ENCODE measurements at regions of chr9 and their contacts with region 1.

Region 1: GRCh38 chr9:14314929-14315645 is 1.1 kb upstream of the NFIB start:
- DNase-seq: peak; percentile 70 to 89
- ATAC-seq: peak; percentile 60 to 66
- H3K4me3 ChIP-seq: peak overlapping the region; percentile 68
- H3K27ac ChIP-seq: peak overlapping the region; percentile 94 to 99
- H3K4me1 ChIP-seq: peaks cover 48% of the 10 kb centered on the region
- CTCF ChIP-seq: no peak
- EP300 ChIP-seq: no peak; a peak in 3 of 5 replicates
- POLR2A ChIP-seq: peak; percentile 19
- RAD21 ChIP-seq: no peak

Region 2: GRCh38 chr9:14221558-14221957 is 93.5 kb before region 1 on chr9:
- CTCF ChIA-PET with region 1: interaction called, 3 read pairs
- POLR2A ChIA-PET with region 1: interaction called, 15 read pairs
- DNase-seq: peak; percentile 65 to 79
- ATAC-seq: peak; percentile 89 to 92
- H3K4me3 ChIP-seq: no peak overlapping the region
- H3K27ac ChIP-seq: peak overlapping the region; percentile 83 to 92
- H3K4me1 ChIP-seq: peaks cover 63% of the 10 kb centered on the region
- CTCF ChIP-seq: no peak
- EP300 ChIP-seq: no peak
- POLR2A ChIP-seq: no peak
- RAD21 ChIP-seq: peak in 1 of 2 experiments; percentile 23; a peak in 1 of 5 replicates

Region 3: DNA sequence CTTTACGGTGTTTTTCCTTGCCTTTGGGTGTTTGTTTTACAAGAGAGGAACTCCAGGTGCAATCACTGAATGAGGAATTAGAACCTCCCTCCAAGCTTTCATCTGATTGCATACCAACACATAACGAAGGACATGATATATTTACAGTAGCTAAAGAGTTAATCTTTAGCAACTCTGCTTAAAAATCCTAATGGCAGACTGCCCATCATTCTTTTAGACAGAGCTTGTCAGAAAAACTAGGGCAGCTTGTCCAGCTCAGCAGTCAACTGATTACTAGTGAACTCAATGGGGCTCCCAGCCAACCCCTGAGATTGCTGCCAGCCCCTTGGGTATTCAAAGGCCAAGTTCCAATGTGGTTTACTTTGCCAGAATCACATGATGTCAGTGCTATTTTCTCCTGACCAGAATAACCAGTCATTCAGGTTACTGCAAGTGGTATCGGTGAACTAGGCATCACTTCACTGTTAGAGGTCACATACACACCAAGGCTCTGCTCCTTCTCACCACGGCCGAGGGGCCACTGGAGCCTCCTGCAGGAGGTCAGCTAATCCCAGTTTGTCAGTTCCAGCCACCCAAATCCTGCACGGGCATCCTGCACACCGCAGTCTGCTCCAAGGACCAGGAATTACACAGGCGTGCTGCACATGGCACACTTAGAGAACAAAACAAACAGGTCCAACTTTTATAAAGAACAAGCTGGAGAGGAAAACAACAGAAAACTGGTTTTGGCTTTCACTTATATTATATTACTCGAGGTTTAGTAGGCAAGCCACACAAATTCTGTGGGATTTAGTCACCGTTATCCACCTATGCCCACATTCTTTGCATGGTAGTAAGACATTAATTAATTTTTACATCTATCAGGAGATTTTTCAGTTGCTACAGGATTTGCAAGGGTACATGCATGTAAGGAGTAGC is 63.7 kb before region 1 on chr9:
- CTCF ChIA-PET with region 1: no interaction called
- POLR2A ChIA-PET with region 1: interaction called, 11 read pairs
- DNase-seq: peak; percentile 25 to 55
- ATAC-seq: peak; percentile 88 to 92
- H3K4me3 ChIP-seq: peak overlapping the region; percentile 31
- H3K27ac ChIP-seq: peak overlapping the region; percentile 70 to 81
- H3K4me1 ChIP-seq: peaks cover 50% of the 10 kb centered on the region
- CTCF ChIP-seq: no peak
- EP300 ChIP-seq: no peak
- POLR2A ChIP-seq: no peak
- RAD21 ChIP-seq: no peak; a peak in 2 of 5 replicates

Region 4: DNA sequence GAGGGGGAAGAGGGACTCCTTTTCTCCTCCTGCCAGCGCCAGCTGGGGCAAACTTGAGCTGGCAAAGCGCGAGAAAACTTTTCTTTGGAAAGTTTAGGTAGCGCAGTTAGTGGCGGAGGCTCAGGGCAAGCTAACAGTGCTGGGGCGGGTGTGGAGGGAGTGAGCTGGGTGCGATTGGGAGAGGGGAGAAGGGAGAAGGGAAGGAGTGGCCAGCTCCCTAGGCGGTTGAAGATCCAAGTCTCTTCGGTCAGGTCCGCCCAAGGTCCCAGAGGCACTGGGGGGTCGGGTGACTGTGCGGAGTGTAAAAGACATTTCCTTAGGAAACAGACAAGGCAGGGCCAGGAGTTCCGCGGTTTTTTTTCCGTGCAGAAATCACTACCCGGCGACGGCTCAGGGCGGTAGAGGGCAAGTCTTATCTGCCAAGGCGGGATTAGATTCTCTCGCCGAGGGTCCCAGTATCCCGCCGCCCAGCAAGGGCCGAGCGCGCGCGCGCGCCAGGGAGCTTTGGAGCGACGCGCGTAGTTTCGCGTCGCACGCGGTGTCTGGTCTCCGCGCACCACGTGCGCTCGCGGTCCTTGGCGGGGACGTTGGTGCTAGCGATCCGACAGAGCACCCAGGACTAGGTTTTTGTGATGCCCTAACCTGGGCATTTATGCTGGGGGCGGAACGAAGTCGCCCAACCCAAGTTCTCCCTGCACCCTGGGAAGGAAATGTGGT is 32.5 kb after region 1 on chr9:
- CTCF ChIA-PET with region 1: interaction called, 4 read pairs
- POLR2A ChIA-PET with region 1: interaction called, 11 read pairs
- DNase-seq: peak; percentile 52 to 68
- ATAC-seq: peak; percentile 79 to 86
- H3K4me3 ChIP-seq: peak overlapping the region; percentile 55
- H3K27ac ChIP-seq: peak overlapping the region; percentile 59 to 83
- H3K4me1 ChIP-seq: peaks cover 10% of the 10 kb centered on the region; the same call in 1 of the 3 replicates
- CTCF ChIP-seq: peak; percentile 46; the same call in 2 of the 3 replicates
- EP300 ChIP-seq: no peak
- POLR2A ChIP-seq: peak; percentile 43
- RAD21 ChIP-seq: peak in 1 of 2 experiments; percentile 48; a peak in 2 of 5 replicates

Region 5: DNA sequence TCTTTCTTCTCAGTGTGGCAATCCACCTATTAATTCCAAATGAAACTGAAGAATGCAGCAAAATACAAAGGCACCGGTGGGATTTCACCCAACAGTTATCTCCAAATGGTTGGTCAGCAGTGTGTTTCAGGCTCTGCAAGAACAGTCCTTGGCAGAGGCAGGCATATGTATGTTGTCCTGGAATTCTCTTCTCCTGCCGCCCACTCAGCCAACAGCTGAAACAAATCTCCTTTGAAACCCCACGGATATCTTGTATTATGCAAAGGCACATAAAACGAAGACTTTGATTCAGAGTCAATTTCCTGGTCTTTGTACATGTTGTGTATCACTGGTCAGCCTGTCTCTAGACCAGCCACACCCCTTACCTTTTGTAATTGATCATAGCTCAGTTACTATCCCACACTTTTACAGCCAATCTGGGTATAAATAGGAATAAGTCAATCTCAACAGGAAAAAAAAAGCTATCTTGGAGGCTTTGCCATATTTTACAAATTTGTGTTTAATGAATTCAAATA is 565.9 kb after region 1 on chr9:
- CTCF ChIA-PET with region 1: no interaction called
- POLR2A ChIA-PET with region 1: no interaction called
- DNase-seq: no peak
- ATAC-seq: no peak
- H3K4me3 ChIP-seq: no peak overlapping the region
- H3K27ac ChIP-seq: no peak overlapping the region
- H3K4me1 ChIP-seq: no peaks in the 10 kb centered on the region
- CTCF ChIP-seq: no peak
- EP300 ChIP-seq: no peak
- POLR2A ChIP-seq: no peak
- RAD21 ChIP-seq: no peak

Region 6: GRCh38 chr9:14891332-14891731 is 576.2 kb after region 1 on chr9:
- CTCF ChIA-PET with region 1: no interaction called
- POLR2A ChIA-PET with region 1: no interaction called
- DNase-seq: no peak
- ATAC-seq: no peak
- H3K4me3 ChIP-seq: no peak overlapping the region
- H3K27ac ChIP-seq: no peak overlapping the region
- H3K4me1 ChIP-seq: no peaks in the 10 kb centered on the region
- CTCF ChIP-seq: no peak
- EP300 ChIP-seq: no peak
- POLR2A ChIP-seq: no peak
- RAD21 ChIP-seq: no peak

Measured in A549 (cell line).